Right cardiac atrium (tissue), 5 donors: ENCODE measurements at regions of chr11 and their contacts with region 1.

Region 1: GRCh38 chr11:62694455-62695167 is 5.3 kb upstream of the LRRN4CL start:
- DNase-seq: peak; percentile 83 to 92 (median 88)
- ATAC-seq: peak; percentile 80 to 88
- H3K4me3 ChIP-seq: no peak overlapping the region
- H3K27ac ChIP-seq: no peak overlapping the region
- H3K4me1 ChIP-seq: peaks cover 2% of the 10 kb centered on the region
- H3K27me3 ChIP-seq: no peaks in the 10 kb centered on the region

Region 2: GRCh38 chr11:62394825-62395538 is 299.6 kb before region 1 on chr11:
- intact Hi-C with region 1: loop called in 2 of 4 experiments (anchors 10 kb)
- DNase-seq: peak; percentile 87 to 95 (median 94)
- ATAC-seq: peak; percentile 76 to 79
- H3K4me3 ChIP-seq: peak overlapping the region; percentile 29
- H3K27ac ChIP-seq: peak overlapping the region; percentile 62
- H3K4me1 ChIP-seq: peaks cover 16% of the 10 kb centered on the region
- H3K27me3 ChIP-seq: no peaks in the 10 kb centered on the region

Region 3: GRCh38 chr11:62573592-62574362 is 120.8 kb before region 1 on chr11 and contains the start of gene EEF1G:
- intact Hi-C with region 1: no loop called
- DNase-seq: peak; percentile 98 to 99 (median 99)
- ATAC-seq: peak; percentile 93 to 97
- H3K4me3 ChIP-seq: peak within 1 kb of the TSS; percentile 86
- H3K27ac ChIP-seq: peak within 1 kb of the TSS; percentile 75
- H3K4me1 ChIP-seq: peaks cover 2% of the 10 kb centered on the region
- H3K27me3 ChIP-seq: no peaks in the 10 kb centered on the region
- total RNA-seq, gene EEF1G: 807 to 1,060 (median 897) TPM

Region 4: GRCh38 chr11:62612366-62613290 is 82.0 kb before region 1 on chr11 and contains the starts of genes EML3 and ROM1:
- intact Hi-C with region 1: loop called in 1 of 4 experiments (anchors 5 kb)
- DNase-seq: peak; percentile 96 to 98 (median 97)
- ATAC-seq: peak; percentile 90 to 91
- H3K4me3 ChIP-seq: peak within 1 kb of the TSS; percentile 87
- H3K27ac ChIP-seq: peak within 1 kb of the TSS; percentile 90
- H3K4me1 ChIP-seq: no peaks in the 10 kb centered on the region
- H3K27me3 ChIP-seq: no peaks in the 10 kb centered on the region
- total RNA-seq, gene EML3: 23.5 to 33.3 (median 26.7) TPM
- total RNA-seq, gene ROM1: 6.1 to 7.9 (median 6.6) TPM